H1 (cell line): ENCODE measurements at regions of chr3 and their contacts with region 1.

Region 1: DNA sequence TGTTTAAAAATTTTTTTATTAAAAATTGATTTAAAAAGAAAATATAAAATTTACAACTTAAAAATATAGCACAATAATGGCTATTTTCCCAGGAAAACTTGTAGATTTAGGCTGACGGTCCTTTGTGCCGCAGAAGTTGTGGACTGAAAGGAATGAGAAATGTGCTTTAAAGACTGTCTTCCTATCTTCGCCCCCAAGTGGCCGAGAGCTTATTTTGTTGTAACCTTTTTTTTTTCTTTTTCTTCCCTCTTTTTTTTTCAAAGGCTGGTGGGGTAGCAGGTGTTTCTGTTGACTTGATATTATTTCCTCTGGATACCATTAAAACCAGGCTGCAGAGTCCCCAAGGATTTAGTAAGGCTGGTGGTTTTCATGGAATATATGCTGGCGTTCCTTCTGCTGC is 15.5 kb downstream of the SLC25A26 start:
- DNase-seq: no peak
- H3K4me3 ChIP-seq: no peak overlapping the region
- H3K27ac ChIP-seq: no peak overlapping the region
- H3K4me1 ChIP-seq: peaks cover 0 to 5% (median 2%) of the 10 kb centered on the region in 4 experiments; a peak in 3 of 7 replicates
- H3K27me3 ChIP-seq: no peaks in the 10 kb centered on the region
- CTCF ChIP-seq: peak in 2 of 3 experiments; percentile 19 to 36; a peak in 2 of 4 replicates
- EP300 ChIP-seq: no peak
- POLR2A ChIP-seq: no peak
- RAD21 ChIP-seq: peak; percentile 17 to 32; a peak in 3 of 4 replicates

Region 2: GRCh38 chr3:66208189-66208588 is 28.1 kb before region 1 on chr3:
- CTCF ChIA-PET with region 1: no interaction called
- POLR2A ChIA-PET with region 1: no interaction called
- DNase-seq: no peak
- H3K4me3 ChIP-seq: no peak overlapping the region
- H3K27ac ChIP-seq: no peak overlapping the region
- H3K4me1 ChIP-seq: peaks cover 0 to 4% (median 1%) of the 10 kb centered on the region in 4 experiments; a peak in 1 of 7 replicates
- H3K27me3 ChIP-seq: no peaks in the 10 kb centered on the region
- CTCF ChIP-seq: no peak
- EP300 ChIP-seq: no peak
- POLR2A ChIP-seq: no peak
- RAD21 ChIP-seq: no peak

Region 3: GRCh38 chr3:66220602-66221377 is 15.5 kb before region 1 on chr3 and contains the start of gene SLC25A26:
- CTCF ChIA-PET with region 1: interaction called, 25 read pairs
- POLR2A ChIA-PET with region 1: interaction called, 25 read pairs
- DNase-seq: peak; percentile 81 to 95
- H3K4me3 ChIP-seq: peak within 1 kb of the TSS; percentile 63 to 92 (median 80)
- H3K27ac ChIP-seq: peak within 1 kb of the TSS; percentile 79
- H3K4me1 ChIP-seq: no peaks in the 10 kb centered on the region; a peak in 1 of 7 replicates
- H3K27me3 ChIP-seq: no peaks in the 10 kb centered on the region
- CTCF ChIP-seq: no peak
- EP300 ChIP-seq: no peak
- POLR2A ChIP-seq: peak; percentile 89 to 95
- RAD21 ChIP-seq: no peak
- total RNA-seq, gene SLC25A26: 26.3 and 30.0 TPM in 2 replicates